K562 (cell line): ENCODE measurements at regions of chr6 and their contacts with region 1.

Region 1: DNA sequence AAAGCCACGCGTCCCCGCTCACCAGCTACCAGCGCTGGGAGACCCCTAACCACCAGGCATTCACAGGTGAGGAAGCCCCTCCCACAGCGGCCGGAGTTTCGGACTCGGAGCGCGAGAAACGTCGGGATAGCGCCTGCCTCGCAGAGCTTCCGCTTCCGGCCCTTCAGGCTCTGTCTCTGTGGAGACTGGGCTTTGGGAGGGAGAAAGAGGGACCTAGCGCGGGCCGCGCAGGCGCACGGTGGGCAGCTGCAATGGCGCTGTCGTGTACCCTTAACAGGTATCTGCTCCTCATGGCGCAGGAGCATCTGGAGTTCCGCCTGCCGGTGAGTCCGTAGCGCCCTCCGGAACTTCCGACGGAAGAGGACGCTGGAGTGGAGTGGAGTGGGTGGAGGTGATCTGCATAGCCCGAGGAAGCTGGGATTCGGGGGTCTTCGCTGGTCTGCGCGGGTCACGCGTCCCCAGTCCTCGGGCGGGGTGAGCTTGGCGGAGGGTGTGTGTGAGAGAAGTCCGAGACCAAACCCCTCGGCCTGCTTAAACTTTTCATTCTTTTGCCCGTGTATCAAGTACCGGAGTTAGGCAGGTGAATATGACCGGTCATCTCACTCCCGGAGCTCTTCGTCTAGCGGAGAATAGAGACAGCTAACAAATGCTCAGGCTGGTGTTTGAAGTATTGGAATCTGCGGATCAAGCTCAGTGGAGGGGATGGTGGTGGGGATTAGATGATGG is at the start of gene TRMT11:
- DNase-seq: peak; percentile 93 to 97 (median 95)
- ATAC-seq: peak; percentile 95
- H3K4me3 ChIP-seq: peak within 1 kb of the TSS; percentile 62
- H3K27ac ChIP-seq: peak within 1 kb of the TSS; percentile 79
- H3K4me1 ChIP-seq: peaks cover 14 to 30% of the 10 kb centered on the region in 2 experiments
- H3K27me3 ChIP-seq: no peaks in the 10 kb centered on the region
- CTCF ChIP-seq: 0 out of 6 replicates have a peak, but pooled peaks of 1 of the 3 experiments have one; percentile 6
- EP300 ChIP-seq: no peak
- POLR2A ChIP-seq: peak; percentile 97
- RAD21 ChIP-seq: no peak
- polyA plus RNA-seq, gene TRMT11: 72.4 to 76.3 TPM

Region 2: GRCh38 chr6:125639466-125640020 is 346.9 kb before region 1 on chr6:
- CTCF ChIA-PET with region 1: no interaction called
- POLR2A ChIA-PET with region 1: no interaction called
- in situ Hi-C with region 1: no loop called
- intact Hi-C with region 1: loop called (anchors 10 kb)
- DNase-seq: no peak
- ATAC-seq: peak; percentile 53
- H3K4me3 ChIP-seq: no peak overlapping the region
- H3K27ac ChIP-seq: no peak overlapping the region
- H3K4me1 ChIP-seq: peaks cover 0 to 5% of the 10 kb centered on the region in 2 experiments; a peak in 1 of 5 replicates
- H3K27me3 ChIP-seq: no peaks in the 10 kb centered on the region
- CTCF ChIP-seq: no peak
- EP300 ChIP-seq: no peak
- POLR2A ChIP-seq: no peak
- RAD21 ChIP-seq: no peak

Region 3: GRCh38 chr6:125790358-125791150 is 195.9 kb before region 1 on chr6 and contains the start of gene NCOA7:
- CTCF ChIA-PET with region 1: no interaction called
- POLR2A ChIA-PET with region 1: interaction called, 13 read pairs
- in situ Hi-C with region 1: no loop called
- intact Hi-C with region 1: no loop called
- DNase-seq: peak; percentile 78 to 88 (median 84)
- ATAC-seq: peak; percentile 84
- H3K4me3 ChIP-seq: peak within 1 kb of the TSS; percentile 82
- H3K27ac ChIP-seq: peak within 1 kb of the TSS; percentile 96
- H3K4me1 ChIP-seq: peaks cover 17 to 18% of the 10 kb centered on the region in 2 experiments
- H3K27me3 ChIP-seq: no peaks in the 10 kb centered on the region
- CTCF ChIP-seq: peak in 1 of 3 experiments; percentile 10; a peak in 1 of 6 replicates
- EP300 ChIP-seq: no peak
- POLR2A ChIP-seq: peak; percentile 63
- RAD21 ChIP-seq: 0 out of 4 replicates have a peak, but pooled peaks of 1 of the 2 experiments have one; percentile 9
- polyA plus RNA-seq, gene NCOA7: 5.8 to 7.0 TPM

Region 4: GRCh38 chr6:125974214-125974866 is 12.1 kb before region 1 on chr6:
- CTCF ChIA-PET with region 1: no interaction called
- POLR2A ChIA-PET with region 1: interaction called, 13 read pairs
- in situ Hi-C with region 1: no loop called
- intact Hi-C with region 1: no loop called
- DNase-seq: peak in 3 of 4 experiments; percentile 39 to 64 (median 41)
- ATAC-seq: peak; percentile 90
- H3K4me3 ChIP-seq: no peak overlapping the region
- H3K27ac ChIP-seq: no peak overlapping the region
- H3K4me1 ChIP-seq: no peaks in the 10 kb centered on the region
- H3K27me3 ChIP-seq: no peaks in the 10 kb centered on the region
- CTCF ChIP-seq: peak; percentile 45 to 80 (median 50); a peak in 5 of 6 replicates
- EP300 ChIP-seq: peak; percentile 23; the same call in 1 of the 2 replicates
- POLR2A ChIP-seq: no peak
- RAD21 ChIP-seq: peak; percentile 81 to 84

Region 5: DNA sequence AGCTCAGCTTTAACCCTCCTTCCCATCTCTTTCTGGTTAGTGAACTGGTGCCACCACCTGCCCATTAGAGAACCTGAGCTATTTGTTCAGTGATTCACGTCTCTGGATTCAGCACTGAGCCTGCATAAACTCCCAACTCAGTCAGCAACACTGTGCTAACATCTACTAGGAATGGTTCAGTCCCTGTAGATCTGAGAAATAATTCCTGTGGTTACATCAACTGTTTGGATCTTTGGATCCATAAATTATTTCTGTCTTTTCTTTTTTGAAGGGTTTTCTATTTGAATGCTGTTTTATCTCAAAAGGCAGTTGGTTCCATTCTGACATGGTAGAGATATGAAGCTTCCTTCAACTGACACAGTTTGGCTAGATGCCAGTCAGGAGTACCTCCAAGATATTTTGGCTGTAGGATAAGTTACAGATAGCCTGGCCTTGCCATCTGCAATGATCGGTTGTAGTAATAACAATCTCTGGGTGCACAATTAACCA is 125.7 kb after region 1 on chr6:
- CTCF ChIA-PET with region 1: no interaction called
- POLR2A ChIA-PET with region 1: no interaction called
- in situ Hi-C with region 1: no loop called
- intact Hi-C with region 1: loop called (anchors 5 kb)
- DNase-seq: peak in 2 of 4 experiments; percentile 57 to 92
- ATAC-seq: peak; percentile 80
- H3K4me3 ChIP-seq: no peak overlapping the region
- H3K27ac ChIP-seq: peak overlapping the region; percentile 73
- H3K4me1 ChIP-seq: peaks cover 0 to 48% of the 10 kb centered on the region in 2 experiments; a peak in 4 of 5 replicates
- H3K27me3 ChIP-seq: no peaks in the 10 kb centered on the region
- CTCF ChIP-seq: peak in 2 of 3 experiments; percentile 2 to 29; a peak in 2 of 6 replicates
- EP300 ChIP-seq: peak; percentile 99
- POLR2A ChIP-seq: no peak
- RAD21 ChIP-seq: peak; percentile 25 to 44; a peak in 3 of 4 replicates

Region 6: GRCh38 chr6:127342946-127343808 is 1356.7 kb after region 1 on chr6 and contains the start of gene ECHDC1:
- CTCF ChIA-PET with region 1: no interaction called
- POLR2A ChIA-PET with region 1: no interaction called
- in situ Hi-C with region 1: no loop called
- intact Hi-C with region 1: loop called (anchors 10 kb)
- DNase-seq: peak; percentile 58 to 88 (median 68)
- ATAC-seq: peak; percentile 86
- H3K4me3 ChIP-seq: peak within 1 kb of the TSS; percentile 77
- H3K27ac ChIP-seq: peak within 1 kb of the TSS; percentile 91
- H3K4me1 ChIP-seq: peaks cover 3 to 14% of the 10 kb centered on the region in 2 experiments; a peak in 3 of 5 replicates
- H3K27me3 ChIP-seq: no peaks in the 10 kb centered on the region
- CTCF ChIP-seq: 0 out of 6 replicates have a peak, but pooled peaks of 1 of the 3 experiments have one; percentile 10
- EP300 ChIP-seq: no peak; the same call in 1 of the 2 replicates
- POLR2A ChIP-seq: peak; percentile 92
- RAD21 ChIP-seq: no peak
- polyA plus RNA-seq, gene ECHDC1: 96.5 to 103 TPM